ENCODE measurements at regions of chr12 and their contacts with region 1.

Region 1: DNA sequence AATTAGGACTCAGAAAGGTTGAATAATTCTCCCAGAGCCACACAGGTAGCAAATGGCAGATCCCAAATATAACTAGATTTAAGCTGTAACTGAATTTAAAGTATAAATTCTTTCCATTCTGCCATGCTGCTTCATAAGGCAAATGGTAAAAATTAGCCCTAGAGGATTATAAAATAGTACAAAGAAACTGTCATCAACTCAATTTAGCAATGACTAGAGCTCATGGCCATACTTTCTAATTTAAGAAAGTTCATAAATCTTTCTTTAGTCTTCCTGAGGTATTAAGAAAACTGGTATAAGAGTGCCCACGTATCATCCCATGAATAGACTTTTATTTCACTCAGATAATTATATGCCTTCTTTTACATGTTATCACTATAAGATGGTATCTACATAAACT is 34.8 kb downstream of the MED13L start:
- DNase-seq: no peak
- ATAC-seq: peak; percentile 71 to 76
- H3K4me3 ChIP-seq: no peak overlapping the region
- H3K27ac ChIP-seq: peak overlapping the region; percentile 65 to 80 (median 74)
- H3K4me1 ChIP-seq: peaks cover 67 to 74% of the 10 kb centered on the region in 2 donors
- H3K27me3 ChIP-seq: no peaks in the 10 kb centered on the region
- CTCF ChIP-seq: no peak
- POLR2A ChIP-seq: no peak

Region 2: DNA sequence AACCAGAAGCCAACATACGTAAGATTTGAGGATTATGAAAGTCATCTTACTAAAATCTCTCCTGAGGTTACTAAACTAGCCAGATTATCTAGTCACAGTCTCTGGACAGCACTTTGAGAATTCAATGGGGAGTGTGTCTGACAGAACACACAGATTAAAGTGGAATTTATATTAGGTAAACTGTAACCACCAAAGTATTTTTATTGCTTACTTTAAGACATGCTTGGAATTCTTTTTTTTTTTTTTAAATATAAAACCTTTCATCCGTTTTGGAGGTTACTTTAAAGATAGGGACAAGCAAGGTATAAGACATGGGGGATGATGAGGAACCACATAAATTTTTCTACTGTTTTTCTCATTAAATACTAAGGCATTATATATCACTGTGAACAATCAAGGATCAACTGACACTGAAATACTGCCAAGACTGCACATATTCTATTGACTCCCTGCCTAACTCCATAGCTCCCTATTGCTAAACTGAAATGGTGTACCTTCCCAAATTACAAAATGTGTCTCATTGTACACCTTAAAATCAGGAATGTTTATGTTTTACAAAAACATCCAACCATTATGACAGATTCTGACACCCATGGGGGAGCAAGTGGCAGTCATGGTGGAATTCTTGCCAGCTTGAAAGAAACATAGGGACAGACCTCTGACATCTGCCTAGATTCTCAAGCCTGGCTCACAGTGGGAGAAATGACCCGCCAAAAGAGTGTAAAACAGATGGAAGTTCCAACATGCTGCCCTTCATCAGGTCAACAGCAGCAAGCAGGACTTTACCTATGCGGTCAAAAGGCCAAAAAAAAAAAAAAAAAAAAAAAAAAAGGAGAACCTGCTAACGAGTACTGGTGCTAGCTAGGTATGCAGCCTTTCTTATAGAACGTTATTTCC is 204.6 kb before region 1 on chr12:
- in situ Hi-C with region 1: no loop called
- intact Hi-C with region 1: no loop called
- DNase-seq: no peak
- ATAC-seq: no peak
- H3K4me3 ChIP-seq: no peak overlapping the region
- H3K27ac ChIP-seq: no peak overlapping the region
- H3K4me1 ChIP-seq: peaks cover 39 to 49% of the 10 kb centered on the region in 2 donors
- H3K27me3 ChIP-seq: no peaks in the 10 kb centered on the region
- CTCF ChIP-seq: no peak
- POLR2A ChIP-seq: no peak

Region 3: GRCh38 chr12:116142936-116143898 is 99.5 kb before region 1 on chr12:
- in situ Hi-C with region 1: loop called in 2 of 4 experiments (anchors 10 to 25 kb)
- intact Hi-C with region 1: loop called (anchors 1 kb)
- DNase-seq: no peak
- ATAC-seq: no peak
- H3K4me3 ChIP-seq: no peak overlapping the region
- H3K27ac ChIP-seq: peak overlapping the region; percentile 32 to 67 (median 64)
- H3K4me1 ChIP-seq: peaks cover 63 to 70% of the 10 kb centered on the region in 2 donors
- H3K27me3 ChIP-seq: no peaks in the 10 kb centered on the region
- CTCF ChIP-seq: no peak
- POLR2A ChIP-seq: no peak

Measured in gastrocnemius medialis (tissue), 4 donors.